ENCODE measurements at regions of chr22 and their contacts with region 1.

Region 1: DNA sequence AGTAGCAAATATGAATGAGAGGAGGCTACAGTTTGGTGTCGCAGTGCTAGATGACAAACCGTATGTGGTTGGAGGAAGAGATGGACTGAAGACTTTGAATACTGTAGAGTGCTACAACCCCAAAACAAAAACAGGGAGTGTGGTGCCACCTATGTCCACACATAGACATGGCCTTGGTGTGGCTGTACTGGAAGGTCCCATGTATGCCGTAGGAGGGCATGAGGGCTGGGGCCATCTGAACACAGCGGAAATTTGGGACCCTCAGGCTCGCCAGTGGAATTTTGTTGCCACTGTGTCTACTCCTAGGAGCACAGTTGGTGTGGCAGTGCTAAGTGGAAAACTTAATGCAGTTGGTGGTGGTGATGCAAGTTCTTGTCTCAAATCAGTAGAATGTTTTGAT is 32.8 kb downstream of the GSTT2B start:
- DNase-seq: no peak
- H3K4me3 ChIP-seq: no peak overlapping the region
- H3K27ac ChIP-seq: no peak overlapping the region
- H3K4me1 ChIP-seq: no peaks in the 10 kb centered on the region
- H3K27me3 ChIP-seq: no peaks in the 10 kb centered on the region
- CTCF ChIP-seq: no peak
- EP300 ChIP-seq: no peak
- POLR2A ChIP-seq: no peak
- RAD21 ChIP-seq: no peak

Region 2: GRCh38 chr22:23790819-23791737 is 137.1 kb before region 1 on chr22:
- CTCF ChIA-PET with region 1: no interaction called
- POLR2A ChIA-PET with region 1: no interaction called
- DNase-seq: no peak
- H3K4me3 ChIP-seq: no peak overlapping the region
- H3K27ac ChIP-seq: no peak overlapping the region
- H3K4me1 ChIP-seq: peaks cover 0 to 10% (median 4%) of the 10 kb centered on the region in 4 experiments; a peak in 6 of 7 replicates
- H3K27me3 ChIP-seq: no peaks in the 10 kb centered on the region
- CTCF ChIP-seq: no peak
- EP300 ChIP-seq: no peak
- POLR2A ChIP-seq: no peak
- RAD21 ChIP-seq: no peak

Region 3: GRCh38 chr22:23970816-23971486 is 42.8 kb after region 1 on chr22:
- CTCF ChIA-PET with region 1: interaction called, 3 read pairs
- POLR2A ChIA-PET with region 1: interaction called, 11 read pairs
- DNase-seq: peak in 1 of 2 experiments; percentile 36
- H3K4me3 ChIP-seq: no peak overlapping the region
- H3K27ac ChIP-seq: no peak overlapping the region
- H3K4me1 ChIP-seq: no peaks in the 10 kb centered on the region
- H3K27me3 ChIP-seq: no peaks in the 10 kb centered on the region
- CTCF ChIP-seq: no peak
- EP300 ChIP-seq: no peak
- POLR2A ChIP-seq: peak; percentile 45 to 47; a peak in 2 of 3 replicates
- RAD21 ChIP-seq: no peak

Region 4: GRCh38 chr22:24037851-24038765 is 109.9 kb after region 1 on chr22:
- CTCF ChIA-PET with region 1: no interaction called
- POLR2A ChIA-PET with region 1: no interaction called
- DNase-seq: no peak
- H3K4me3 ChIP-seq: no peak overlapping the region
- H3K27ac ChIP-seq: no peak overlapping the region
- H3K4me1 ChIP-seq: no peaks in the 10 kb centered on the region
- H3K27me3 ChIP-seq: no peaks in the 10 kb centered on the region
- CTCF ChIP-seq: no peak
- EP300 ChIP-seq: no peak
- POLR2A ChIP-seq: no peak
- RAD21 ChIP-seq: no peak

Measured in H1 (cell line).